ENCODE measurements at regions of chr7 and their contacts with region 1.

Region 1: DNA sequence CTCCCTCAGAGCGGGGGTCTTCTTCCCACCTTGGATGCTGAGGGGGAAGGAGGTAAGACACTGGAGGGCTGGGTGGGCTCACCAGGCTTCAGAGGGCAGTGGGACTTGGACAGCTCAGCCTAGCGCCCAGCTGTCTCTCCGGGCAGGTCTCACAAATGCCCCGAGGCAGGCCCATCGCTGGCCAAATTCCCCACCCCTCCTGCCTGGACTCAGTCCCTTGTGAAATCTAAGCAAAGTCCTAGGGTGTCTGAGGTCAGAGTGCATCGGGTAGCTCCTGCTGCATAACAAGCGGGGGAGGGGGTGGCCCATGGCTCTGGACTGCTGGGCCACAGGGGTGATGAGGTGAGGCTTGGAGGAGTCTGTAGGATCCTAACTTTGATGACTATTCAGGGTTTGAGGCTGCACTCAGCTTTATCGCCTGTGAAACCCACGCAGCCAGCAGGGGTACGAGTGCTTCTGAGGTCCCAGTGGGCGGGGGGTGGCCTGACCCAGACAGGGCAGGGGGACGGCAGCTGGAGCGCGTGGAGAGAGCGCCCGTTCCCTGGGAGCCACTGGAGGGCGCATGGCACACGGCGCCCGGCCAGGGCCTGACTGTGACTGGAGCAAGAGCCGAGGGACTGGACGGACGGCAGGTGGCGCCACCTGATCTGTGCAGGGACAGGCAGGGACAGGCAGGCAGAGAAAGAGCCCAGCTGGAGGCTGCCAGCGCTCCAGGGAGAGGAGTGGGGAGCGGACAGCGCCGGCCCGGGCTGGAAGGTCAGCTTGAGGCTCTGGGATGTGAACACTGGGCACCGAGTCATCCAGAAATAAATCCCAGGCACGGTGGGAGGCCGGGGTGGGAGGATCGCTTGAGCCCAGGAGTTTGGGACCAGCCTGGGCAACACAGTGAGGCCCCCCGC is 10.0 kb downstream of the CYP2W1 start:
- DNase-seq: peak; percentile 91 to 99
- H3K4me3 ChIP-seq: no peak overlapping the region
- CTCF ChIP-seq: peak in 2 of 3 donors; percentile 97 to 98
- POLR2A ChIP-seq: no peak

Region 2: GRCh38 chr7:923108-924041 is 69.6 kb before region 1 on chr7:
- intact Hi-C with region 1: no loop called
- DNase-seq: peak; percentile 82 to 93
- H3K4me3 ChIP-seq: no peak overlapping the region
- CTCF ChIP-seq: no peak
- POLR2A ChIP-seq: no peak

Region 3: DNA sequence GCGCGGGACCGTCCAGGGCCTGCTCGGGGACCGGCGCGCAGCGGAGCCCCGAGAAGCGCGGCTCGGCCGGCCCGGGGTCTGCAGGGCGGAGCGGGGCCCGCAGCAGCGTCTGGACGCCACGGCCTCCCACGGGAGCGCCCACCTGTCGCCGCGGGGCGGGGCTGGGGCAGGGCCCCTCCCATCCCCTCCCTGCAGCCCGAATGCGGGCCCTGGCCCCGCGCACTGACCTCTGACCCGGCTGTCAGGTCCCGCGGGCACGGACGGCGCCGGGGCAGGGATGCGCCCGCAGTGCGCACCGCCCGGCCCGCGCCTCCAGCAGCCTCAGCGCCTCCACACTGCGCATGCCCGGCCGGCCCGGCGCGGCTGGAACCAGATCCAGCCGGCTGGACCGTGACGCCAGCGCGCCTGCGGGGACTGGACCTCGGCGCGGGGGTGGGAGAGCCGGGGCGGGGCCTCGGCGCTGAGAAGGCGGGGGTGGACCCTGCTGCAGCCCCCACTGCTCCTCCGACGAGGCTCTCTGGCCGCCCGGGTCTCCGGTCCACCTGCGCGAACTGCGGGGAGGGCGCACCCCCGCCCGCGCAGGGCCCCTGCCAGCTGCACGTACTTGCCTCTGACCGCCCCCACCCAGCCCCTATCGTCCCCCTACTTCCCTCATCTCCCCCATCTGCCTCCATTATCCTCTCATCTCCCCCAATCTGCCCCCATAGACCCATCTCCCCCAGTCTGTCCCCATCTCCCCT is 35.2 kb after region 1 on chr7:
- intact Hi-C with region 1: no loop called
- DNase-seq: peak; percentile 76 to 97
- H3K4me3 ChIP-seq: peak overlapping the region; percentile 40
- CTCF ChIP-seq: no peak
- POLR2A ChIP-seq: no peak

Region 4: GRCh38 chr7:1065263-1066260 is 72.6 kb after region 1 on chr7:
- intact Hi-C with region 1: loop called (anchors 5 kb)
- DNase-seq: peak; percentile 75 to 96
- H3K4me3 ChIP-seq: no peak overlapping the region
- CTCF ChIP-seq: peak in 1 of 3 donors; percentile 78
- POLR2A ChIP-seq: no peak

Region 5: GRCh38 chr7:1144269-1144771 is 151.4 kb after region 1 on chr7:
- intact Hi-C with region 1: loop called (anchors 10 kb)
- DNase-seq: no peak
- H3K4me3 ChIP-seq: no peak overlapping the region
- CTCF ChIP-seq: no peak
- POLR2A ChIP-seq: no peak

Measured in lower leg skin (tissue), 4 donors.